Common myeloid progenitor, CD34-positive (primary cell): ENCODE measurements at regions of chr6 and their contacts with region 1.

Region 1: GRCh38 chr6:90118581-90118980 is 178.1 kb downstream of the BACH2 start:
- DNase-seq: no peak
- H3K4me3 ChIP-seq: no peak overlapping the region
- H3K27ac ChIP-seq: no peak overlapping the region
- H3K4me1 ChIP-seq: no peaks in the 10 kb centered on the region
- H3K27me3 ChIP-seq: no peaks in the 10 kb centered on the region

Region 2: DNA sequence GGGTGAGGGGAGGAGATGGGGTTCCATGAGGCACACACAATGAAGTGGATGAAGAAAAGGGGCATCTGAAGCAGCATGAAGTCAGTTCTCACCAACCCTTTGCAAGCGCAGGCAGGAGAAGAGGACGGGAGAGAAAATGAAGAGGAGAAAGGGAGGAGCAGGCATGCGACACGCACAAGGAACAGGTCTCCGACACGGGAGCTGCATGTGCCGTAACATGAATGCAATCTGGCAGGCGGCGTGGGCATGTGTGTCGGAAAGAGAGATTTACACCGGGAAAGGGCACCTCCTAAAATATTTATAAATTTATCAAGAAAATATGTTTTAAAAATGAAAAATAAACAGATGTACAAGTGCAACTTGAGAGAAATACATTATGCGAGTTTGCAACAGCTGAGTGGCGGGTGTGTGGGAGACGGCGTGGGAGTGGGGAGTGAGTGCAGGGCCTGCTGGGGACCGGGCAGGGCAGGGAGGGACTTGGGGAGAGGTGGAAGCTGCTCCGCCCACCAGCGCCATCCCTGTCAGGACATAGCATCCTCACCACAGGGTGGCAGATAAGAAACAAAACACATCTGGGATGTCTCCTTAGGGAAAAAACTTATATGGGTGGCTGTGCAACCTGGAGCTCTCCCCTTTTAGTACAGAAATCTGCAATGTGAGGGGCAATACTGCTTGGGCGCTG is 183.8 kb before region 1 on chr6:
- CTCF ChIA-PET with region 1: no interaction called
- POLR2A ChIA-PET with region 1: no interaction called
- DNase-seq: no peak
- H3K4me3 ChIP-seq: no peak overlapping the region
- H3K27ac ChIP-seq: no peak overlapping the region
- H3K4me1 ChIP-seq: peaks cover 0 to under 1% (median under 1%) of the 10 kb centered on the region in 4 experiments
- H3K27me3 ChIP-seq: no peaks in the 10 kb centered on the region

Region 3: GRCh38 chr6:90131614-90132423 is 13.2 kb after region 1 on chr6:
- CTCF ChIA-PET with region 1: interaction called, 14 read pairs
- POLR2A ChIA-PET with region 1: no interaction called
- DNase-seq: no peak
- H3K4me3 ChIP-seq: no peak overlapping the region
- H3K27ac ChIP-seq: no peak overlapping the region
- H3K4me1 ChIP-seq: peaks cover 7 to 20% (median 13%) of the 10 kb centered on the region in 4 experiments
- H3K27me3 ChIP-seq: no peaks in the 10 kb centered on the region

Region 4: GRCh38 chr6:90175627-90176538 is 57.3 kb after region 1 on chr6:
- CTCF ChIA-PET with region 1: no interaction called
- POLR2A ChIA-PET with region 1: no interaction called
- DNase-seq: peak in 2 of 3 donors; percentile 70 to 76
- H3K4me3 ChIP-seq: no peak overlapping the region
- H3K27ac ChIP-seq: no peak overlapping the region
- H3K4me1 ChIP-seq: peaks cover 14 to 30% (median 21%) of the 10 kb centered on the region in 4 experiments
- H3K27me3 ChIP-seq: no peaks in the 10 kb centered on the region